ENCODE measurements at regions of chr1 and their contacts with region 1.

Region 1: DNA sequence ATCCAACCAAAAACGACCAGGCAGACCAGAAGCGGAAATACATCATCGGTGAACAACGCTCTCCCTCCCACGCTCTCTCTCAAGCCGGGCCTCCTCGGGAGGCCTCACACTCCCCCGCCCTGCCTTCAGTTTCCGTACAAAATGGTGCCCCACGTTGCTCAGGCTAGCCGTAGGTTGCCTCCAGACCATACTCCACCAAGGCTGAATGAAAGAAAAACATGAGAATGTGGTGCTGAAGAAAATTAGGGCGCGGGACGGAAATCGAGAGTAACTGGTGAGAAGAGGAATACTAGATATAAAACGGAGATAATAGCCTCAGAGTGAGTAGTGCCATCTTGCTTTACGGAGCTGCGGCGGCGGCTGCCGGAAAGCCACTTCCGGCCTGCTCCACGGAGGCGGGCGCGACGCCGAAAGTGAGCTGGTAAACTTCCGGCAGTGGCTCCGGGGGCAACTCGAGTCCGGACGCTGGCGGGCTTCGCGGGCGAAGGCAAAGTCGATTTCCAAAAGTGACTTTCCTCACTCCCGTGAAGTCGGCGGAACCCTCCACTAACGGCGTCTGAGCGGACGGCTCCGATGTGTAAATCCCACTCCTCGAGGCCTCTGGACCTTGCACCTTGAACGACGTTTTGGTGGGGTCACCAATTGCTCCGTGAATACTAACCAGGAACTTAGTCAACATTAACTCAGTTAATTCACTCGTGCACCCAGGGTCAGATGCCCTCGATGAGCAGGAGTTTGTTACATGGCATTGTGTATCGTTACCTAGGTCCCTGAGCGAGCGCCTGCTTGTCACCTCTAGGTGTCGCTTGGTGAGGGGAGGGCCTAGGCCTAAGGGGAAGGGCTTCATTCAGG is at the start of gene SH3BP5L:
- DNase-seq: peak; percentile 78 to 96 (median 95)
- ATAC-seq: peak; percentile 92
- H3K4me3 ChIP-seq: peak within 1 kb of the TSS; percentile 89
- H3K4me3 Mint-ChIP-seq: peak within 1 kb of the TSS; percentile 92 to 99 (median 98)
- H3K27ac ChIP-seq: peak within 1 kb of the TSS; percentile 96
- H3K27ac Mint-ChIP-seq: peak within 1 kb of the TSS; percentile 95 to 100 (median 99)
- H3K4me1 ChIP-seq: peaks cover 37 to 47% of the 10 kb centered on the region in 2 donors
- H3K4me1 Mint-ChIP-seq: peaks cover 43 to 67% (median 52%) of the 10 kb centered on the region in 7 donors
- H3K27me3 ChIP-seq: no peaks in the 10 kb centered on the region
- H3K27me3 Mint-ChIP-seq: peaks cover 0 to 2% (median 0%) of the 10 kb centered on the region in 5 donors
- total RNA-seq, gene SH3BP5L: 22.5 to 51.1 (median 33.3) TPM

Region 2: DNA sequence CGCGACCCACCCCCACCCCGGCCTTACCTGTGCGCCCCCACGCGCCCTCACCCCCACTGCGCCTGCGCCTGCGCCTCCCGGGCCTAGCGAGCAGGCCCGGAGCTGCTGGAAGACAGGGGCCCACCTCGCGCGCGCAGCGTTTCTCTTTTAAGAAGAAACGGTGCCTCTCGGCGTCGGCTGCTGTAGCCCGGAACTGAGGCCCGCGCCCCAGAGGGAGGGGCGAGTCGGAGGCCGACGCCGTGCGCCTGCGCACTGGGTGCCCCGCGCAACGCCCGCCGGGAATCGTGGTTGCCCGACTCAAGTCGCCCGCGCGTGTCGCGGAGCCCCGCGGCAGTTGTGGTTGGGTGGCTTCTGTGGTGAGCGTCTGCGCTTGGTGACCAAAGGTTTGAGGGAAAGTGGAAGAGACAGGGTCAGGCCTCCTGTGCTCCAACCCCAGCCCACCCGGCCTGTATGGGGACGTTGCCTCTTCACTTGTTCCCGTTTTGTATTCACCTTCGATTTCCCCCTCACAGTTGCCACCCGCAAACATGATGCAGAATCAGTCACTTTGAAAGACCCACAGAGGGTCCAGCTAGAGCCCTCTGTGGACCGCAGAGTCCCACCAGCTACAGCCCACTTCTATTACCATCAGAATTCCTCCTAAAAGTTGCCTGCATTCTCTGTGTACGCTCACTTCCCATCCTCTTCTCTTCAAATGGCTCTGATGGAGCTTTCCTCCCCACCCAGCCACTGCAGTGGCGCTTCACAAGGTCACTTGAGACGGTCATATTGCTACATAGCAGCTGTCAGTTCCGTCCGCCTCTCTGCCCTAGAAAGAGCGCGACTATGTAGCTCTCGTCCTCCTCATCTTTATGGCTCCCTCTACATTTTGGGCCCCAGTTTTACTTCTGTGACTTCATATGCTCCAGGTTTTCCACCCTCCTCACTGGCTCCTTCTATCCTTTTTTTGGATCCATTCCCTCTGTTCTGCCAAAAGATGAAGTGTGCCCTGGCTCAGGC is 33.1 kb after region 1 on chr1 and contains the start of gene ZNF692:
- CTCF ChIA-PET with region 1: interaction called, 7 read pairs
- POLR2A ChIA-PET with region 1: interaction called, 33 read pairs
- intact Hi-C with region 1: loop called (anchors 1 kb)
- DNase-seq: peak; percentile 96 to 98 (median 97)
- ATAC-seq: peak; percentile 93
- H3K4me3 ChIP-seq: peak within 1 kb of the TSS; percentile 78
- H3K4me3 Mint-ChIP-seq: peak within 1 kb of the TSS; percentile 81 to 98 (median 91)
- H3K27ac ChIP-seq: peak within 1 kb of the TSS; percentile 81
- H3K27ac Mint-ChIP-seq: peak within 1 kb of the TSS; percentile 90 to 98 (median 96)
- H3K4me1 ChIP-seq: peaks cover 39 to 50% of the 10 kb centered on the region in 2 donors
- H3K4me1 Mint-ChIP-seq: peaks cover 23 to 60% (median 51%) of the 10 kb centered on the region in 7 donors
- H3K27me3 ChIP-seq: no peaks in the 10 kb centered on the region
- H3K27me3 Mint-ChIP-seq: no peaks in the 10 kb centered on the region
- total RNA-seq, gene ZNF692: 44.5 to 87.5 (median 68.0) TPM

Region 3: DNA sequence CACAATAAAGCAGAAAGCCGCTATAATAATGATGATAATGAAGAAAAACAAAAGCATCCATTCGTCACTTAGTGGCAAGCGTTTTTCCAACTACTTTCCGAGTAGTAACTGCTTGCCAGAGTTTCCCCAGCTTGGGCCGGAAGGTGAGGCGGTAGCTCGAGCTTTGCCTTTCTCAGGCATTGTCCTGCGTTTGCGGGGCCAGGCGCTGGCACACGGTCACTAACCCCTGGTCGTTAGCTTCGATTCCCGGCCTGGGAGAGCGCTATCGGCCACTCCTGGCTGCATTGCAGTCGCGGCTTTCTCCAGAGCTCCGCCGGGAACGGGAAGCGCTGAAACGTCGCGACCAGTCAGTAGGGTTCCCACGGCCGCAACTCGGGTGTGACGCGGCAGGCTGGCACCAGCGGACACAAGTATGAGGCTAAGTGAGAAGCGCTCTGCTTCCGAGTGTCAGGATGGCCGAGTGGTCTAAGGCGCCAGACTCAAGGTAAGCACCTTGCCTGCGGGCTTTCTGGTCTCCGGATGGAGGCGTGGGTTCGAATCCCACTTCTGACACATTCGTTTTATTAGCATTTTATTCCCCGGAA is 47.4 kb after region 1 on chr1:
- CTCF ChIA-PET with region 1: interaction called, 3 read pairs
- POLR2A ChIA-PET with region 1: interaction called, 9 read pairs
- intact Hi-C with region 1: loop called (anchors 1 kb)
- DNase-seq: peak; percentile 80 to 99 (median 91)
- ATAC-seq: peak; percentile 84
- H3K4me3 ChIP-seq: peak overlapping the region; percentile 86
- H3K4me3 Mint-ChIP-seq: peak overlapping the region; percentile 85 to 100 (median 97)
- H3K27ac ChIP-seq: peak overlapping the region; percentile 76
- H3K27ac Mint-ChIP-seq: peak overlapping the region; percentile 91 to 100 (median 99)
- H3K4me1 ChIP-seq: no peaks in the 10 kb centered on the region
- H3K4me1 Mint-ChIP-seq: peaks cover 8 to 31% (median 23%) of the 10 kb centered on the region in 7 donors
- H3K27me3 ChIP-seq: no peaks in the 10 kb centered on the region
- H3K27me3 Mint-ChIP-seq: peaks cover 0 to 26% (median 0%) of the 10 kb centered on the region in 5 donors

Measured in naive thymus-derived CD4-positive, alpha-beta T cell (primary cell).